SK-N-SH (cell line): ENCODE measurements at regions of chr22 and their contacts with region 1.

Region 1: GRCh38 chr22:30606455-30607299 is at the start of gene TCN2:
- DNase-seq: peak; percentile 80
- H3K4me3 ChIP-seq: peak within 1 kb of the TSS; percentile 53 to 56
- H3K27ac ChIP-seq: peak within 1 kb of the TSS in 1 of 2 experiments; percentile 64; a peak in 2 of 4 replicates
- H3K4me1 ChIP-seq: peaks cover 10 to 15% of the 10 kb centered on the region in 2 experiments; a peak in 2 of 4 replicates
- H3K27me3 ChIP-seq: no peaks in the 10 kb centered on the region
- CTCF ChIP-seq: no peak
- EP300 ChIP-seq: no peak
- RAD21 ChIP-seq: no peak
- polyA plus RNA-seq, gene TCN2: 4.1 and 4.5 TPM in 2 replicates

Region 2: GRCh38 chr22:30591588-30592359 is 14.9 kb before region 1 on chr22 and contains the start of gene PES1:
- CTCF ChIA-PET with region 1: interaction called, 13 read pairs
- POLR2A ChIA-PET with region 1: interaction called, 3 read pairs
- DNase-seq: peak; percentile 95
- H3K4me3 ChIP-seq: peak within 1 kb of the TSS; percentile 71 to 91
- H3K27ac ChIP-seq: peak within 1 kb of the TSS; percentile 80 to 94
- H3K4me1 ChIP-seq: peaks cover 3 to 11% of the 10 kb centered on the region in 2 experiments; a peak in 3 of 4 replicates
- H3K27me3 ChIP-seq: peaks cover 8% of the 10 kb centered on the region; the same call in 1 of the 2 replicates
- CTCF ChIP-seq: no peak
- EP300 ChIP-seq: no peak
- RAD21 ChIP-seq: no peak
- polyA plus RNA-seq, gene PES1: 109 and 119 TPM in 2 replicates

Region 3: GRCh38 chr22:30680991-30681770 is 74.5 kb after region 1 on chr22:
- CTCF ChIA-PET with region 1: no interaction called
- POLR2A ChIA-PET with region 1: no interaction called
- DNase-seq: peak; percentile 34
- H3K4me3 ChIP-seq: no peak overlapping the region
- H3K27ac ChIP-seq: peak overlapping the region in 1 of 2 experiments; percentile 67; a peak in 2 of 4 replicates
- H3K4me1 ChIP-seq: peaks cover 0 to 28% of the 10 kb centered on the region in 2 experiments; a peak in 1 of 4 replicates
- H3K27me3 ChIP-seq: no peaks in the 10 kb centered on the region
- CTCF ChIP-seq: no peak
- EP300 ChIP-seq: 0 out of 4 replicates have a peak, but pooled peaks of 1 of the 2 experiments have one; percentile 6
- RAD21 ChIP-seq: no peak